ENCODE measurements at regions of chr20 and their contacts with region 1.

Region 1: GRCh38 chr20:40962730-40963504 is 65.7 kb upstream of the TOP1 start:
- DNase-seq: peak; percentile 59 to 78 (median 60)
- ATAC-seq: peak; percentile 65 to 87 (median 83)
- H3K4me3 ChIP-seq: no peak overlapping the region
- H3K27ac ChIP-seq: no peak overlapping the region
- H3K4me1 ChIP-seq: peaks cover 0 to 3% (median 0%) of the 10 kb centered on the region in 12 donors
- H3K27me3 ChIP-seq: no peaks in the 10 kb centered on the region
- CTCF ChIP-seq: peak; percentile 82 to 97 (median 91)
- POLR2A ChIP-seq: no peak

Region 2: GRCh38 chr20:39112178-39112743 is 1850.7 kb before region 1 on chr20:
- intact Hi-C with region 1: loop called in 8 of 10 experiments (anchors 5 to 10 kb)
- DNase-seq: peak in 4 of 5 donors; percentile 30 to 51 (median 39)
- ATAC-seq: peak; percentile 73 to 89 (median 84)
- H3K4me3 ChIP-seq: no peak overlapping the region
- H3K27ac ChIP-seq: no peak overlapping the region
- H3K4me1 ChIP-seq: peaks cover 0 to 5% (median 1%) of the 10 kb centered on the region in 12 donors
- H3K27me3 ChIP-seq: peaks cover 0 to 35% (median 14%) of the 10 kb centered on the region in 9 donors
- CTCF ChIP-seq: peak; percentile 43 to 71 (median 63)
- POLR2A ChIP-seq: no peak

Region 3: GRCh38 chr20:40160097-40160550 is 802.8 kb before region 1 on chr20:
- intact Hi-C with region 1: loop called in 3 of 10 experiments (anchors 5 to 10 kb)
- DNase-seq: peak in 4 of 5 donors; percentile 17 to 41 (median 30)
- ATAC-seq: peak; percentile 51 to 76 (median 66)
- H3K4me3 ChIP-seq: no peak overlapping the region
- H3K27ac ChIP-seq: no peak overlapping the region
- H3K4me1 ChIP-seq: no peaks in the 10 kb centered on the region
- H3K27me3 ChIP-seq: peaks cover 0 to 3% (median 0%) of the 10 kb centered on the region in 9 donors
- CTCF ChIP-seq: peak; percentile 52 to 75 (median 68)
- POLR2A ChIP-seq: no peak

Region 4: GRCh38 chr20:40265825-40266533 is 696.9 kb before region 1 on chr20:
- intact Hi-C with region 1: loop called in 2 of 10 experiments (anchors 5 kb)
- DNase-seq: peak in 1 of 5 donors; percentile 33
- ATAC-seq: peak in 2 of 4 donors; percentile 55 to 66
- H3K4me3 ChIP-seq: no peak overlapping the region
- H3K27ac ChIP-seq: peak overlapping the region in 1 of 12 donors; percentile 9
- H3K4me1 ChIP-seq: peaks cover 0 to 25% (median 0%) of the 10 kb centered on the region in 12 donors
- H3K27me3 ChIP-seq: peaks cover 0 to 3% (median 0%) of the 10 kb centered on the region in 9 donors
- CTCF ChIP-seq: peak in 11 of 12 donors; percentile 20 to 63 (median 41)
- POLR2A ChIP-seq: no peak

Region 5: DNA sequence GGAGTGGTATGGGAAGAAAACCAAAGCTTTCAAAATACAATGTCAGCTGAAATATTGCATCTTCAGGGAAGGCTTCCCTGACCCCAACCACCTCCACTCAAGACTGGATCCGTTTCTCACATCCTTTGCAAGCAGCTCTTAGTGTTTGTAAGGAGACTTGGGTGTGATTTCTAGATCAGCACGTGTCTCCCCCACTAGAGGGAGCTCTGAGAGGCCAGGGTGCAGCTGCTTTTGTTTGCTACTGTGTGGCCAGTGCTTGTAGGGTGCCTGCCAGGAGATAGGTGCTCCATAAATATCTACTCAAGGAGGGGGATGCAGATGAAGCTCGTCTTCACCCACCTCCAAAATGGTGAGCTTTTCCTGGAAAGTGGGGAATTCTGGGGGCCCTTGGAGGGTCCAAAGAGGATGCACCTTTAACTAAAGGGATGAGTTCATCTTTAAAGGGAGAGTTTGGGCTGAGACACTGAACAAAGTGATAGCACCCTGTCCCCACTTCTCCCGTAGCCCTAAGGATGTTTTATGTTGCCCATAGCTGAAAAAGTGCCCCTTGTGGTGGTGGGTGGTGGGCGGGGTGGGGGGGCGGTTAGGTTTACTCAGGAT is 221.3 kb before region 1 on chr20:
- intact Hi-C with region 1: loop called in 6 of 10 experiments (anchors 1 to 10 kb)
- DNase-seq: peak in 3 of 5 donors; percentile 26 to 44 (median 43)
- ATAC-seq: peak in 1 of 4 donors; percentile 42
- H3K4me3 ChIP-seq: no peak overlapping the region
- H3K27ac ChIP-seq: no peak overlapping the region
- H3K4me1 ChIP-seq: no peaks in the 10 kb centered on the region
- H3K27me3 ChIP-seq: peaks cover 0 to 11% (median 0%) of the 10 kb centered on the region in 9 donors
- CTCF ChIP-seq: peak; percentile 41 to 75 (median 56)
- POLR2A ChIP-seq: no peak

Region 6: DNA sequence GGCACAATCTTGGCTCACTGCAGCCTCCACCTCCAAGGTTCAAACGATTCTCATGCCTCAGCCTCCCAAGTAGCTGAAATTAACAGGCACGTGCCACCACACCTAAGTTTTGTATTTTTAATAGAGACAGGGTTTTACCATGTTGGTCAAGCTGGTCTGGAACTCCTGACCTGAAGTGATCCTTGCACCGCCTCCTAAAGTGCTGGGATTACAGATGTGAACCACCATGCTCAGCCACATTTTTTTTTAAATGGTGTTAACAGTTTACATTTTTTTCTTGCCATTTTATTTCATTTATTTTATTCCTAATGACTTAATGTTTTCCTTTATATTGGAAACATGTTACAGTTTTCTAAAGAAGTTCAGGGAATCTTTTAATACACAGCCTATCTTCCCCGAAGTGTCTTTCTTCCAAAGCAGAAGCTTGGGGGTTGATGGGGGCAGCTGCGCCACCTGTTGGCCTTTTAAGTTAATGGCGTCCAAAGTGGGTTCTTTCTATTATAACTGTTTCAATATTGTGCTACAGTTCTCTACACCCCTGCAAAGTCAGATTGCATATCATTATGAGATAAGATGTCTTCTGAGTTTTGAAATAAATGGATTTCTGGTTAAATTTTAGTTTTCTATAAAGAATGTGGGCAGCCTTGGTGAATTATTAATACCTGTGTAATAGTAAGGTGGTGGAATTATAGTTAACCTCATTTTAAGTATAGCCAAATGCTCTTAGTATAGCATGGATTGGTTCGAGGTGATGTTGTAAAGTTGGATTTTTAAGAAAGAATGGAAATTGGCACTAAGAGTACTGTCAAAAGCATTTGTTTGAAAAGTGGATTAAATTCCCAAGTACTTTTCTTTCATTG is 132.4 kb after region 1 on chr20:
- intact Hi-C with region 1: loop called in 9 of 10 experiments (anchors 1 to 5 kb)
- DNase-seq: peak; percentile 38 to 72 (median 54)
- ATAC-seq: peak in 3 of 4 donors; percentile 34 to 77 (median 71)
- H3K4me3 ChIP-seq: no peak overlapping the region
- H3K27ac ChIP-seq: no peak overlapping the region
- H3K4me1 ChIP-seq: peaks cover 0 to 12% (median 0%) of the 10 kb centered on the region in 12 donors
- H3K27me3 ChIP-seq: no peaks in the 10 kb centered on the region
- CTCF ChIP-seq: peak; percentile 83 to 94 (median 86)
- POLR2A ChIP-seq: no peak